ENCODE measurements at regions of chr12 and their contacts with region 1.

Region 1: DNA sequence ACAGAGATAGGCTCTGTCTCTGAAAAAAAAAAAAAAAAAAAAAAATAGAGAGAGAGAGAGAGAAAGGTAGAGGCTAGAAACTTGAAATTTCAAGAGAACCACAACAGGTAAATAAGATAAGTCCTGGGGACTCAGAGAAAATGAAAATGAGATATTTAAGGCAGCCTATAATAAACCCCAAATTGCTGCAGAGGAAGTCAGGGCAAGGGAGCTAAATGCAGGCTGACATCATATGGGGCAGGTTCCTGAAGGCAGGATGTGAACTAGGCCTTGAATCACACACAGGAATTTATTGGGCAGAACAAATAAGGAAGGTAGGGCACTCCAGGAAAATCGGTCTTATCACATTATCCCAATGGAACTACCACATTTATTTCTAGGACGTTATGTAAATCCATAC is 54.9 kb upstream of the NUDT4 start:
- DNase-seq: no peak
- H3K4me3 ChIP-seq: no peak overlapping the region
- H3K27ac ChIP-seq: no peak overlapping the region
- H3K4me1 ChIP-seq: peaks cover 11% of the 10 kb centered on the region; the same call in 1 of the 2 replicates
- H3K27me3 ChIP-seq: no peaks in the 10 kb centered on the region
- CTCF ChIP-seq: no peak

Region 2: DNA sequence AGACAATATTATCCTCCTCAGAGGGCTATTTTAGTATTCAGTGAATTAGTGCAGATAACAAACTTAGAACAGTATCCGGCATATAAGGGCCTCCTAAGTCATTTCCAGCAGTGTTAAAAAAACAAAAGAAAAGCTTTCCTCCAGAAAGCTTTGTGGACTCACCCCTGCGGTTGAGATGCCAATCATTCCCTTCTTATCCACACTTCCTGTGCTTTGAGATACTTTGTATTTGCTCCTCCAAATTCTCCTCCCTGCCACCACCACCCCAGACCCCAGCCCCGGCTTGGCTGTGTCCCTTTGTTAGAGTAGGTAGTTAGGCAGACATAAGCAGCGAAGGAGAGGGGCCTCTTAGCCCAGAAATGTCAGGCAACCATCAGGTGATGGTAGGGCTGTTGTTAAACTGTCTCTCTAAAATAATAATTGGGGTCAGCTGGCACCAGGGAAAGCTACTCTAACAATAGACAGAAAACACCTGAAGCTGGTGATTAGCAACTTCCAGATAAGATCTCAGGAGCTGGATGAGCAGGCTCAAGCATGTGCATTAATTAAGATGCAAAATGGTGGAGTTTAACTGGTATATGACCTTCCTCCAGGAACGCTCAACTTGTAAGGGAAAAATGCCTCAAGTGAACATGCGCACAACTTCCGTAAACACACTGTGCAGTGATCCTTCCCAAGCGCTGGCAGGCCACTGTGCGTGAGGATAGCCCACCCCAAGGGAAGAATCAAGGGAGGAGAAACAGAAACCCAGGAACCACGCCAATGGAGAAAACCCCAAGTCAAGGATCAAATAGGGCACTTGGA is 241.6 kb before region 1 on chr12:
- CTCF ChIA-PET with region 1: no interaction called
- POLR2A ChIA-PET with region 1: interaction called, 37 read pairs
- intact Hi-C with region 1: no loop called
- DNase-seq: peak; percentile 28 to 40
- H3K4me3 ChIP-seq: no peak overlapping the region
- H3K27ac ChIP-seq: peak overlapping the region; percentile 27; the same call in 1 of the 2 replicates
- H3K4me1 ChIP-seq: peaks cover 29% of the 10 kb centered on the region
- H3K27me3 ChIP-seq: no peaks in the 10 kb centered on the region
- CTCF ChIP-seq: no peak

Region 3: DNA sequence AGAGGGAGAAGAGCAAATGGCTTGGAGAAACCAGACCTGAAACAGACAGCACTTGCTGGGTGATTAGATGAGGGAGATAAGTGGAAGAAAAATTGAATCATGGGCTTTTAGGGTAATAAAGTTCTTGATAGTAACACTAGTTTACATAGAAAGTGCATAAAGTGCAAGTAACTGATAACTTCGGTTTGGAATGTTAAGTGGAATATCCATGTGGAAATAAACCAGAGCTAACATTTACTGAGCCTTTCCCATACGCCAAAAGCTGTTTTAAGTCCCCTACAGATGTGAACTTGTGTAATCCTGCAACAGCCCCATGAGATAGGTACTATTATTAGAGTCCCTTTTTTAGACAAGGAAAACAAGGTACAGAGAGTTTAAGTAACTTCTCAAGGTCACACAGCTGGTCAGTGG is 22.2 kb before region 1 on chr12:
- CTCF ChIA-PET with region 1: no interaction called
- POLR2A ChIA-PET with region 1: interaction called, 34 read pairs
- intact Hi-C with region 1: no loop called
- DNase-seq: no peak
- H3K4me3 ChIP-seq: no peak overlapping the region
- H3K27ac ChIP-seq: no peak overlapping the region
- H3K4me1 ChIP-seq: no peaks in the 10 kb centered on the region
- H3K27me3 ChIP-seq: no peaks in the 10 kb centered on the region
- CTCF ChIP-seq: no peak

Region 4: DNA sequence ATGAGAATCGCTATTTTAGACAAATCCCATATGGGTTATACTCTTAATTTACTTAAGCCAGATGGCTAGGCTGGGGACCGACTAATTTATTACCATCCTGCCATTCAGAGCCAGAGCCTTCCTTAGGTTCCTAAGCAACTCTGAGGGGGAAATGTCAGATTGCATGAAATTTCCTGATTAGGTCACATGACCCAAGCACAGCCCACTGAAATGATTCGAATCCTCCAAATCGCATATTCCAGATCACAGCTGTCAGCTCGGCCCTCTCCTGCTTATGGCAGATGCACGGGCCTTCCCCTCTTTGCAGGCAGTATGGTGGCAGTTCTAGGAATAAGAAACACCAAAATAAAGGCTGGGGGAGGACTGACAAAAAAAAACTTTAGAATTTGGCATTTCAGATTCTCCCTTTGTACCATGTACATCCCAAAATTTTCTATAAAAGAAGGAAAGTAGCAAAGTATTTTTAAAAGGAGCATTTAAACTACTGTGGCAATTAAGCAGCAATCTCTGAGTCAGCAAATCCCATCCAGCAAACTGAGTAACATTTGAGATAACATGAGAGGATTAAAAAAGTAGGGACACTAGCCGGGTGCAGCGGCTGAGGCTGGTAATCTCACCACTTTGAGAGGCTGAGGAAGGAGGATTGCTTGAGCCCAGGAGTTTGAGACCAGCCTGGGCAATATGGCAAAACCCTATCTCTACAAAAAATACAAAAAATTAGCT is 24.4 kb after region 1 on chr12:
- CTCF ChIA-PET with region 1: no interaction called
- POLR2A ChIA-PET with region 1: no interaction called
- intact Hi-C with region 1: no loop called
- DNase-seq: no peak
- H3K4me3 ChIP-seq: no peak overlapping the region
- H3K27ac ChIP-seq: no peak overlapping the region
- H3K4me1 ChIP-seq: no peaks in the 10 kb centered on the region
- H3K27me3 ChIP-seq: no peaks in the 10 kb centered on the region
- CTCF ChIP-seq: no peak

Region 5: DNA sequence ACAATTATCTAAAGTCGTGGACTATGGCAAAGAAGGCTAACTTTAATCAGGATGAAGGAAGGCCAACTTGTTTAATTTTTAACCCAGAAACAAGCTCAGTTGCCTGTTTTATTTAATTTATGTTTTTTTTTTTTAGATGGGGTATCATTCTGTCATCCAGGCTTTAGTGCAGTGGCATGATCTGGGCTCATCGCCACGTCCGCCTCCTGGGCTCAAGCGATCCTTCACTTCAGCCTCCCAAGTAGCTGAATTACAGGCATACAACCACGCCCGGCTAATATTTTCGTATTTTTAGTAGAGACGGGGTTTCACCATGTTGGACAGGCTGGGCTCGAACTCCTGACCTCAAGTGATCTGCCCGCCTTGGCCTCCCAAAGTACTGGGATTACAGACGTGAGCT is 74.6 kb after region 1 on chr12:
- CTCF ChIA-PET with region 1: no interaction called
- POLR2A ChIA-PET with region 1: no interaction called
- intact Hi-C with region 1: no loop called
- DNase-seq: no peak
- H3K4me3 ChIP-seq: no peak overlapping the region
- H3K27ac ChIP-seq: no peak overlapping the region
- H3K4me1 ChIP-seq: no peaks in the 10 kb centered on the region
- H3K27me3 ChIP-seq: no peaks in the 10 kb centered on the region
- CTCF ChIP-seq: no peak

Region 6: DNA sequence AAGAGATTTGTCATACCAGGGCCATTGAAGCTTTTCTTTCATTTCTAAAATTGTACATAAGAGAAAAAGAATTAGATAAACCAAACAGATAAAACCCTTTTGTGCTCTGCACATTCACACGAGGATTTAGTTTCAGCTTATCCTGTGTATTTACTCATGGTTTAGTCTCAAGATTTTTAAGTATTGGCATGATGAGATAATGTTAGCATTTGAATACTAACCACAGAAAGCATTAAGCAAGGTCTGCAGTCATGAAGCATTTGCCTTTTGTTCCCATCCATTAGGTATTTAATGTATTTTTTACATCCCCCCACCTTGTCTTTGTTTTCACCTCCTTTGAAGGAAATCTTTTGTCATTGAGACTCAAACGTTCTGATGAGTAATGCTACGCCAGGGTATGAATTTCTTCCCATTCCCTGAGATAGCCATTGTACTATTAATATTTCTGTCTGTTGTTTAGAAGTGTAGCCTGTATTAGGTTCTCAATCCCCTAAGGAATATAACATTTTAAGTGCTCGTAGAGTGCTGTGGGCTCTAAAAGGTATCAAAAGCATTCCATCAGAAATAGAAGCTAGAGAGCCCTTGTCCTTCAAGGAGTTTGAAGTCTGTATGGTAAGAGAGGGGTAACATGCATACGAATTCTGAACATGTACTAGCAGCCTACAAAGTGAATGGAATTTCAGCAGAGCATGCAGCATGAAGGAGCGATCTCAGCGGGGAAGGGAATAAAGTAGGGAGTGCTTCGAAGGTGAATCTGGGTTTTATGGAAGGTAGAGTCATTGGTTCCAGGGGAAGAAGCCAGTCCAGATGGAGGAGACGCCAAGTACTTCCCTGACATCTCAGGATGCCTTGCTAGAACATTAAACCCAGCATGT is 376.7 kb after region 1 on chr12:
- CTCF ChIA-PET with region 1: no interaction called
- POLR2A ChIA-PET with region 1: no interaction called
- intact Hi-C with region 1: no loop called
- DNase-seq: peak in 1 of 2 experiments; percentile 68
- H3K4me3 ChIP-seq: no peak overlapping the region
- H3K27ac ChIP-seq: no peak overlapping the region
- H3K4me1 ChIP-seq: peaks cover 11% of the 10 kb centered on the region; the same call in 1 of the 2 replicates
- H3K27me3 ChIP-seq: no peaks in the 10 kb centered on the region
- CTCF ChIP-seq: no peak